T-cell (primary cell): ENCODE measurements at regions of chr13 and their contacts with region 1.

Region 1: GRCh38 chr13:94620286-94620896 is 18.7 kb downstream of the GPR180 start:
- DNase-seq: peak in 10 of 35 experiments; percentile 4 to 46 (median 18)
- ATAC-seq: peak in 3 of 4 experiments; percentile 56 to 70 (median 67)
- H3K4me3 ChIP-seq: no peak overlapping the region
- H3K4me3 Mint-ChIP-seq: no peak overlapping the region
- H3K27ac ChIP-seq: no peak overlapping the region
- H3K27ac Mint-ChIP-seq: no peak overlapping the region
- H3K4me1 ChIP-seq: peaks cover 0 to 6% of the 10 kb centered on the region in 2 experiments
- H3K4me1 Mint-ChIP-seq: peaks cover 6 to 12% (median 10%) of the 10 kb centered on the region in 3 donors
- H3K27me3 ChIP-seq: no peaks in the 10 kb centered on the region
- H3K27me3 Mint-ChIP-seq: no peaks in the 10 kb centered on the region

Region 2: GRCh38 chr13:94351292-94351990 is 268.9 kb before region 1 on chr13:
- CTCF ChIA-PET with region 1: interaction called in 1 of 2 experiments, 11 read pairs
- POLR2A ChIA-PET with region 1: no interaction called
- DNase-seq: no peak
- ATAC-seq: peak in 1 of 4 experiments; percentile 58
- H3K4me3 ChIP-seq: no peak overlapping the region
- H3K4me3 Mint-ChIP-seq: no peak overlapping the region
- H3K27ac ChIP-seq: no peak overlapping the region
- H3K27ac Mint-ChIP-seq: no peak overlapping the region
- H3K4me1 ChIP-seq: no peaks in the 10 kb centered on the region
- H3K4me1 Mint-ChIP-seq: peaks cover 6 to 9% (median 8%) of the 10 kb centered on the region in 3 donors
- H3K27me3 ChIP-seq: no peaks in the 10 kb centered on the region
- H3K27me3 Mint-ChIP-seq: peaks cover 0 to 6% of the 10 kb centered on the region in 2 donors

Region 3: GRCh38 chr13:94549232-94550061 is 70.9 kb before region 1 on chr13:
- CTCF ChIA-PET with region 1: interaction called, 6 to 10 read pairs
- POLR2A ChIA-PET with region 1: no interaction called
- DNase-seq: peak; percentile 84 to 95 (median 90)
- ATAC-seq: peak; percentile 89 to 93 (median 93)
- H3K4me3 ChIP-seq: peak overlapping the region; percentile 77 to 85
- H3K4me3 Mint-ChIP-seq: peak overlapping the region; percentile 79 to 92 (median 89)
- H3K27ac ChIP-seq: peak overlapping the region; percentile 95
- H3K27ac Mint-ChIP-seq: peak overlapping the region; percentile 96 to 99
- H3K4me1 ChIP-seq: peaks cover 6 to 25% of the 10 kb centered on the region in 2 experiments
- H3K4me1 Mint-ChIP-seq: peaks cover 19 to 30% (median 22%) of the 10 kb centered on the region in 3 donors
- H3K27me3 ChIP-seq: no peaks in the 10 kb centered on the region
- H3K27me3 Mint-ChIP-seq: peaks cover 3 to 4% of the 10 kb centered on the region in 2 donors

Region 4: DNA sequence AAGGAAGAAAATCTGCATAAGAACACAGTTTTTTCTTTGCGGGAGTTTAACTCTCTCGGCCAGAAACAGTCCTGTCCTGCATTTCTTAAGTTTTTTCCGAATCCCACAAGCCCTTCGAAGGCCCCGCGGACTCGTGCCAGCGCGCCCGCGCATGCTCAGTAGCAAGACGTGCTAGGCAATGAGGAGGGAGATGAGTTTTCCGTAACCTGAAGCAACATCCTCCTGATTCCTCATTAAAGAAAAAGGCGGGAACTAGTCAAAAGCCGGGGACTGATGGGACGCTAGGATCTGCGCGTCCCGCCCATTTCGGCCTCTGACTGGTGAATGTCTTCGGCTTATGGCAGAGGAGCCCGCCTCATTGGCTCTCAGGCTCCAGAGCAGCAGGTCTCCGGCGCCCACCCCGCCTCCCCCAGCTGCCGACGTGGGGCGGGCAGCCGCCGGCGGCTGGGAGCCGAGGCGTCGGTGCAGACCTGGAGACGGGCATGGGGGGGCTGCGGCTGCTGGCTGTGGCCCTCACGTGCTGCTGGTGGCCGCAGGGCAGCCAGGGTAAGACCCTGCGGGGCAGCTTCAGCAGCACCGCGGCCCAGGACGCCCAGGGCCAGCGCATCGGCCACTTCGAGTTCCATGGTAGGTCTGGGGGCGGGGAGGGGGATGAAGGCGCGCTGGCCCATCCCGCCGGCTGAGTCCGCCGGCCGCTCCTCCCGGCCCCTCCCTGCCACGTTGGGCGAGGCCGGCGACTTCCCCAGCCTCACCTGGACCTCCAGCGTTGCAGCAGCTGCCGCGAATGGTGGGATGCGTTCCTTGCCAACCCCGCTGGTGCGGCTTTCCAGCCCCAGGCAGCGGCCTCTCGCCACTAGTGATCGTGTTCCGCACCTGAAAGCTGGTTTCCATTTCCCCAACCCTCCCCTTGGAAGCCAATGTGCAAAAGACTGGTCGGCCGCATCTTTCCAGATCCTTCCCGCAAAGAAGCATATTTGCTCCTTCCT is 18.7 kb before region 1 on chr13 and contains the start of gene GPR180:
- CTCF ChIA-PET with region 1: interaction called, 4 to 18 read pairs
- POLR2A ChIA-PET with region 1: no interaction called
- DNase-seq: peak; percentile 71 to 94 (median 83)
- ATAC-seq: peak; percentile 98 to 99 (median 99)
- H3K4me3 ChIP-seq: peak within 1 kb of the TSS; percentile 55 to 85
- H3K4me3 Mint-ChIP-seq: peak within 1 kb of the TSS; percentile 77 to 82 (median 79)
- H3K27ac ChIP-seq: peak within 1 kb of the TSS; percentile 35
- H3K27ac Mint-ChIP-seq: peak within 1 kb of the TSS; percentile 79 to 93
- H3K4me1 ChIP-seq: peaks cover 7 to 8% of the 10 kb centered on the region in 2 experiments
- H3K4me1 Mint-ChIP-seq: peaks cover 27 to 34% (median 27%) of the 10 kb centered on the region in 3 donors
- H3K27me3 ChIP-seq: no peaks in the 10 kb centered on the region
- H3K27me3 Mint-ChIP-seq: no peaks in the 10 kb centered on the region
- total RNA-seq, gene GPR180: 2.0 to 4.0 (median 3.4) TPM

Region 5: DNA sequence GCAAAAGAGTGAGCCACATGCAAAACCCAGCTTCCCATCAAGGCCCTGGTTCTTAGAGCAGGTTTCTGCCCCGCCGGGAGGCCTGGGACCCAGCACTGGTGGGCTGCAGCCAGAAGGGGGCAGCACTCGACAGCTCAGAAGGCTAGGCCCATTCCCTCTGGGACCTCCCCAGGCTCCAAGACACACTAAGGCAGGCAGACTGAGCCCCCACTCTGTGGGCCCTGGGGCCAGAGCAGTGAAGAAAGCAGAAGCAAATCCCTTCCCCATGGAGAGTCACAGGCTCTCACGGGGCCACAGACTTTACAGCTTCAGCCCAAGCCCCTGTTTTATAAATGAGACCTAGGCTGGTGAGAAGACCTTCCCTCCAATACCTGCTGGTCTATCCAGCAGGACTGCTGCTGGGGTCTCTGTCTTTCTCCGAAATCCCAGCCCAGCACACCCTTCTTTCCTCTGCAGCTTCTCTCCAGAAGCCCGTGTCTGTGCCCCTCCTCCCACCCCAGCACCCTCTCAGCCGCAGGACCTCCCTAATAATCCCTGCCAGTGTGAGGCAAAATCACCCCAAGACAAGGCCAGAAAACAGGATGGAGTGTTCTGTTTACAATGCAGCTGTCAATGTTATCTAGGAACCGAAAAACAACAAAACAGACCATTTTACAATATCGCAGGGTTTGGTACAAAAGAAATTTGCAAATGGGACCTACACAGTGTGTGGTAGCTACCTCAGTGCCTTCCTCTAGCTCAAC is 571.6 kb after region 1 on chr13:
- CTCF ChIA-PET with region 1: interaction called in 1 of 2 experiments, 11 read pairs
- POLR2A ChIA-PET with region 1: no interaction called
- DNase-seq: peak; percentile 1 to 67 (median 37)
- ATAC-seq: peak; percentile 58 to 76 (median 70)
- H3K4me3 ChIP-seq: no peak overlapping the region
- H3K4me3 Mint-ChIP-seq: no peak overlapping the region
- H3K27ac ChIP-seq: no peak overlapping the region
- H3K27ac Mint-ChIP-seq: peak overlapping the region in 1 of 2 donors; percentile 8
- H3K4me1 ChIP-seq: no peaks in the 10 kb centered on the region
- H3K4me1 Mint-ChIP-seq: peaks cover 5 to 16% (median 5%) of the 10 kb centered on the region in 3 donors
- H3K27me3 ChIP-seq: no peaks in the 10 kb centered on the region
- H3K27me3 Mint-ChIP-seq: no peaks in the 10 kb centered on the region

Region 6: GRCh38 chr13:95536632-95537241 is 916.3 kb after region 1 on chr13:
- CTCF ChIA-PET with region 1: interaction called in 1 of 2 experiments, 4 read pairs
- POLR2A ChIA-PET with region 1: interaction called in 1 of 2 experiments, 18 read pairs
- DNase-seq: peak in 1 of 35 experiments; percentile 16
- ATAC-seq: no peak
- H3K4me3 ChIP-seq: no peak overlapping the region
- H3K4me3 Mint-ChIP-seq: no peak overlapping the region
- H3K27ac ChIP-seq: no peak overlapping the region
- H3K27ac Mint-ChIP-seq: no peak overlapping the region
- H3K4me1 ChIP-seq: no peaks in the 10 kb centered on the region
- H3K4me1 Mint-ChIP-seq: no peaks in the 10 kb centered on the region
- H3K27me3 ChIP-seq: peaks cover 0 to 3% of the 10 kb centered on the region in 2 experiments
- H3K27me3 Mint-ChIP-seq: peaks cover 24 to 37% of the 10 kb centered on the region in 2 donors